ENCODE measurements at regions of chr10 and their contacts with region 1.

Region 1: DNA sequence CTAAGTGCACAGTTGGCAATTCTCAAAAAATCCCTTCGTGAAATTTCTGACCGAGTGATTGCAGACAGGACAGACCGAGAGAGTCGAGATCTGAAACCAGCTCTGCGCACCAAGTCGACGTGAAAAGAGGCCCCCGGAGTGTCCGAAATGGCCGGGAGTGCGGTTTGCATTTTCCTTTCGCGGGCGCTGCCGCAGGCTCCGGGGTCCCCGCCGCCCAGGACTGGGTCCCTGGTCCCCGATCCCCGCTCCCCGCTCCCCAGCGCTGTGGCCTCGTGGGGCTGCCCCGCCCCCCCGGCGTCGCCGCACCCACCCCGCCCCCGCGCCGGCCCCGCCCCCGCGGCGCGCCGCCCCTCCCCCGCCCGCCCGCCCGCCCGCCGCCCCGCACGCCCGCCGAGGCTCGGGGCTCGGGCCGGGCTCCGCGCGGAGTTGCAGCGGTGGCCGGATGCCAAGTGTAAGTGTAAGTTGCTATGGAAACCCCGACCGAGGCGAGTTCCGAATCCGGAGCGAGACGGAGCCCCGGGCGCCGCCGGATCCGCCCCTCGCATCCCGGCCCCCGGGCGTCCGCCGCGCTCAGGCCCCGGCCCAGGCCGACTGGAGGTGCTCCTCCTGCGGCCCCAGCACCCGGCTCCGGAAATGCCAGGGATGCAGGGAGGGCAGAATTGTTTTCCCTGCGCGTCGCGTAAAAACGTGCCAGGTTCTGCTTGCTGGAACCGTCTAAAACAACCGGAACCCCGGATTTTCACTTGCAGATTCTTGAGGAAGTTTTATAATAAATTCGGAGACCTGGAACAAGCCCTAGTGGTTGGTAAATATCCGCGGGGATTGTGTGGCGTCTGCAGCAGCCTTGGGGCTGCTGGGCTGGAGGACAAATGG is 4.6 kb downstream of the BMI1 start:
- DNase-seq: peak; percentile 83 to 92
- ATAC-seq: peak; percentile 72
- H3K4me3 ChIP-seq: peak overlapping the region; percentile 44 to 92
- H3K27ac ChIP-seq: peak overlapping the region in 1 of 2 donors; percentile 52
- H3K4me1 ChIP-seq: peaks cover 2 to 3% of the 10 kb centered on the region in 2 donors
- H3K27me3 ChIP-seq: no peaks in the 10 kb centered on the region

Region 2: DNA sequence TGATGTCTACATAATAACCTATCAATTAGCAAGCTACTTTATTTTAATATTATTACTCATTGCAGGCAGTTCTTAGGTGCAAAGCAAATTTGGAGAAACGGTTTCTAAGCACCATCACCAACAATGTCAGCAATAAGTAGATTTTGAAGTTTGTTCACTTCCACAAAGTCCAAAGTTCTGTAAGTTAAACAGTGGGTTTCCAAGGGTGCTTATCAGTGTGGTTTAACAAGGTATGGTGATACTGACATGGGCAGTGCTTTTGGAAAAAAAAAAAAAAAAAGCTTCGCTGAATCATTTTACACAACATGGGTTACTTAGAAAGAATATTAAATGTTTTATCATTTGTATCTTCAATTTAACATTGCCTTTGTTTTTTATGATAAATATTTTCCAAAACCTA is 121.6 kb after region 1 on chr10:
- intact Hi-C with region 1: no loop called
- DNase-seq: no peak
- ATAC-seq: no peak
- H3K4me3 ChIP-seq: no peak overlapping the region
- H3K27ac ChIP-seq: no peak overlapping the region
- H3K4me1 ChIP-seq: peaks cover 0 to 2% of the 10 kb centered on the region in 2 donors
- H3K27me3 ChIP-seq: no peaks in the 10 kb centered on the region

Region 3: DNA sequence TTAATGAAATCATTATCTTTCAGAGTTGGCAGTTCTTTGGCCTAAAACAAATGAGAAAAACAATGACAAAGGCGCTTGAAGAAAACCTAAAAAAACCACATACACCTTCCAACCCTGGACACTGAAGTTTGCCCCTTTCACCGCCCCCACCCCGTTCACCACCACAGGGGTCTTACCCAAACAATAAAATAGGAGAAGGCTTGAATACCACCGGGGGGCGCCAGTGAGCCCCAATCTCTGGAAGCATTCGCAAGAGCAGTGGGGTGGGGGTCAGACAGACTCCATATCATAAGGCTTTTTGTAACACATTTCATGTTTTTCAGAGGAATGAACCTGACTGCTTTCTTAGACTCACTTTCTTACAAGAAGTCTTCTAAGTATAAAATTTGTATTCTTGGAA is 225.2 kb after region 1 on chr10:
- intact Hi-C with region 1: loop called in 1 of 2 experiments (anchors 10 kb)
- DNase-seq: peak in 1 of 2 donors; percentile 82
- ATAC-seq: no peak
- H3K4me3 ChIP-seq: no peak overlapping the region
- H3K27ac ChIP-seq: no peak overlapping the region
- H3K4me1 ChIP-seq: peaks cover 2 to 3% of the 10 kb centered on the region in 2 donors
- H3K27me3 ChIP-seq: no peaks in the 10 kb centered on the region